Right ventricle myocardium inferior (tissue), 1 donor: ENCODE measurements at regions of chr2 and their contacts with region 1.

Region 1: GRCh38 chr2:98149333-98149697 is 62.3 kb downstream of the VWA3B start:
- DNase-seq: no peak
- ATAC-seq: peak; percentile 68

Region 2: DNA sequence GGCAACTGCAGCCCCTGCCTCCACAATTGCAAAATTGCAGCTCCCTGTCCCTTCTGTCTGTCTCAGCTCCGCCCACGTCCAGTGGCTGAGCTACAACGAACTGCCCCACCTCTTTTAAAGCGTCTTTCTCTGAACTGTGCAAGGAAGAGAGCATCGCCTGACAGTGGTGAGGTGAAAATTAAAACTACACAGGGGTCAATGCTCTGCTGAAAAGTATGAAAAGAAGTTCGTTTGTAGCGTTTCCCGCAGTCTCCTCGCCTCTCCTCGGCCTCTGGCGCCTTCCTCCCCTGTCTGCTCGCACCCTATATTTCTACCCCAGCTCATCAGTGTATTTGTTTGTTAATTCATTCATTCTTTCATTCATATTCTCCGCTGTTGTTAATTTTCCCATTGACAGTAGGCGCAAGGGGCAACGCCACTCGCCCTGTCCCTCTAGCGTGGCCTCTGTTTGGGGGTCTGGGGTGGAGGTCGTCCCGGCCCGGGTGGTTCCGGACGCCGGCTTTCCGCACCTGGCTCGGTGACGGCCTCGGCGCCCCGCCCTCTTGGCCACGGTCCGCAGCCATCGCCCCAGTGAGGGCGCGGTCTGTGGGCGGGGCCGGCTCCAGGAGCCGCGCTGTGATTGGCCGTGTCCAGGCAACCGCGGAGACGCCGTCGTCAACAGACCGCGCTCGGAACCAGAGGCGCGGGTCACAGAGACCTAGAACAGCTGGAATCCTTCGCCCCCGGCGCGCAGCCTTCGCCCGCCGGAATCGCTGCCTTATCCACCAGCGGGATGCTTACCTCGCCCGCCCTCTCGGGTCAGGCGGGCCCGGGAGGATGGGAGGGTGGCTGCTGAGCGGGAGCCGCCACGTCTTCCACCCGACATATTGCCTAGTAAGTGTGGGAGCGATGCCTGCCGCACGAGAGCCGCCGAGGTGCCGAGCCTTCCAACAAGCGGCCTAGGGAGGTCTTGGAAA is 62.5 kb before region 1 on chr2 and contains the start of gene VWA3B:
- intact Hi-C with region 1: loop called (anchors 10 kb)
- DNase-seq: peak; percentile 90
- ATAC-seq: peak; percentile 96
- total RNA-seq, gene VWA3B: 0.38 TPM

Region 3: GRCh38 chr2:98295721-98296414 is 146.6 kb after region 1 on chr2:
- intact Hi-C with region 1: no loop called
- DNase-seq: no peak
- ATAC-seq: no peak